ENCODE measurements at regions of chr5 and their contacts with region 1.

Region 1: DNA sequence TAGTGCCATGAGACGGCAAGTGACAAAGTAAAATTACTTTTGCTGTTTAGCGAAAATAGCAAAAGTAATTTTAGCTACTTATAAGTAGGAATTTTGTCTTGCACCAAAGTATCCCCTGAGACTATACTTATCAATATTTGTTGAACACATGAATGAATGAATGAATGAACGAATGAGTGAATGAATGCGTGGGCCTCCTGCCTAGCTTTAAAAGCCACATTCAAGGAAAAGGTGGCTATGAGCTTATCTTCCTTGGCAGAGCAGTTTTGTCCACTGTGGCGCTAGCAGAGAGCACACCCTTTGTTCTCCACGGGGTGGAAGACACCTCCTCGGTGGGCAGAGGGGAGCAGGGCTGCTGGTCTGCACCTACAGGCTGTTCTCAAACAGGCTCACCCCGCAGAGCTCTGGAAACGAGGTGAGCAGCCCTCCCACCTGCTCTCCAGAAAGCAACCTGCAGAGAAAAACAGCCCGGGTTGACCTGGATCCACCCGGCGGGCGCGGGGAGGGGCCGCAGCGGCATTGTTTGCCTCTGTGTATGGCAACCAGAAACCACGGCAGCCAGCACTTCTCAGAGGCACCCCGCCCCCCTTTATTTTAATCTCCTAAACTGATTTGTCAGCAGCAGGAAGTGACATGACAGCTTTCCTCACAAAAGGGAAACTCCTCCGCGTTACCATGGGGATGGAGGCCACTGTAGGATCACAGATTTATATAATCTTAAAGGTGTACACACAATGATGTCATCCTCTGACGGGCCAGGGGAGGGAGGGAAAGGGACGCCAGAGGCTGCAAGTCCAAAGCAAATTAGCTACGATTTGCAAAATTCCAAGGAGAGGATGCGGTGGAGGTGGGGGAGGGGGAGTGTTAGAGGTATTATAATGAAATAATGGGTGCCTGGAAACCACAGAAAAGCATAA is 5.9 kb downstream of the DUSP1 start:
- DNase-seq: peak; percentile 96
- H3K4me3 Mint-ChIP-seq: peak overlapping the region; percentile 78
- H3K27ac Mint-ChIP-seq: peak overlapping the region; percentile 90
- H3K4me1 Mint-ChIP-seq: peaks cover 46% of the 10 kb centered on the region
- H3K27me3 Mint-ChIP-seq: no peaks in the 10 kb centered on the region

Region 2: GRCh38 chr5:172777881-172778814 is 13.0 kb after region 1 on chr5:
- CTCF ChIA-PET with region 1: interaction called, 6 read pairs
- POLR2A ChIA-PET with region 1: interaction called, 9 read pairs
- intact Hi-C with region 1: loop called (anchors 1 kb)
- DNase-seq: peak; percentile 47
- H3K4me3 Mint-ChIP-seq: peak overlapping the region; percentile 38
- H3K27ac Mint-ChIP-seq: peak overlapping the region; percentile 87
- H3K4me1 Mint-ChIP-seq: peaks cover 61% of the 10 kb centered on the region
- H3K27me3 Mint-ChIP-seq: no peaks in the 10 kb centered on the region

Region 3: DNA sequence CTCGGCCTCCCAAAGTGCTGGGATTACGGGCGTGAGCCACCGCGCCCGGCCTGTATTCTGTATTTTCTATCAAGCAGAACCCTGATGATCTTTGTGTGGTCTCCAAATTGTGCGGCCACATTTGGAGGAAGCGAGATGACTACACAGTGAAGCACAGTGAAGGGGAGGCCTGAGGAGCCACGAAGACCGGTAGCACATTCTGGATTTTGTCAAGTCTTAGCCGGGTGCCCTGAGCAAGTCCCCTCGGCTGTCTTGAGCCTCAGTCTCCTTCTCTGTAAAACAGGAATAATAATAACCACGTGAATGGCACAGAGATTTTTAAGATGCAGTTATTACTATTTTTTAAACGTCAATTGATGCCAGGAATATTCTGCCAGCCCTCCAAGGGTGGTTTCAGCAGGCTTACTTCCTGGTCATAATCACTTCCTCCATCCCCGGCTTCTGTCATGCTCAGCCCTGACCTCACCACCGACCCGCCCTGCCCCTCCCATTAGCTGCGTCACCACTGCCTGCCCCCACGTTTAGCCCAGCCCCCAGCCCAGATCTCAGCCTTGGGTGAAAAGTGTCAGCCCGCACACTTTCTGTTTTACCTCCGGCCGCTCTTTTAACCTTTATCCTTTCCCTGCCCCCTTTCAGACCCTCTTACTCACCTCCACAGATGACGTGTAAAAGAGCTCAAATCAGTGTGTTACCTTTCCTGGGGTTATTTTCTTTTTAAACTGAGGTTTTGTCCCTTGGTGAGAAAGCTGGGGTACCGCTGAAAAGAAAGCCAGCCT is 42.0 kb after region 1 on chr5:
- CTCF ChIA-PET with region 1: interaction called, 6 read pairs
- POLR2A ChIA-PET with region 1: interaction called, 14 read pairs
- intact Hi-C with region 1: loop called (anchors 1 kb)
- DNase-seq: peak; percentile 98
- H3K4me3 Mint-ChIP-seq: peak overlapping the region; percentile 29
- H3K27ac Mint-ChIP-seq: peak overlapping the region; percentile 84
- H3K4me1 Mint-ChIP-seq: peaks cover 17% of the 10 kb centered on the region
- H3K27me3 Mint-ChIP-seq: no peaks in the 10 kb centered on the region

Region 4: GRCh38 chr5:172918421-172919371 is 153.6 kb after region 1 on chr5:
- CTCF ChIA-PET with region 1: no interaction called
- POLR2A ChIA-PET with region 1: no interaction called
- intact Hi-C with region 1: no loop called
- DNase-seq: no peak
- H3K4me3 Mint-ChIP-seq: no peak overlapping the region
- H3K27ac Mint-ChIP-seq: no peak overlapping the region
- H3K4me1 Mint-ChIP-seq: no peaks in the 10 kb centered on the region
- H3K27me3 Mint-ChIP-seq: no peaks in the 10 kb centered on the region

Region 5: GRCh38 chr5:172932313-172933017 is 167.4 kb after region 1 on chr5:
- CTCF ChIA-PET with region 1: interaction called, 13 read pairs
- POLR2A ChIA-PET with region 1: no interaction called
- intact Hi-C with region 1: loop called (anchors 1 kb)
- DNase-seq: peak; percentile 82
- H3K4me3 Mint-ChIP-seq: no peak overlapping the region
- H3K27ac Mint-ChIP-seq: no peak overlapping the region
- H3K4me1 Mint-ChIP-seq: peaks cover 6% of the 10 kb centered on the region
- H3K27me3 Mint-ChIP-seq: no peaks in the 10 kb centered on the region

Region 6: DNA sequence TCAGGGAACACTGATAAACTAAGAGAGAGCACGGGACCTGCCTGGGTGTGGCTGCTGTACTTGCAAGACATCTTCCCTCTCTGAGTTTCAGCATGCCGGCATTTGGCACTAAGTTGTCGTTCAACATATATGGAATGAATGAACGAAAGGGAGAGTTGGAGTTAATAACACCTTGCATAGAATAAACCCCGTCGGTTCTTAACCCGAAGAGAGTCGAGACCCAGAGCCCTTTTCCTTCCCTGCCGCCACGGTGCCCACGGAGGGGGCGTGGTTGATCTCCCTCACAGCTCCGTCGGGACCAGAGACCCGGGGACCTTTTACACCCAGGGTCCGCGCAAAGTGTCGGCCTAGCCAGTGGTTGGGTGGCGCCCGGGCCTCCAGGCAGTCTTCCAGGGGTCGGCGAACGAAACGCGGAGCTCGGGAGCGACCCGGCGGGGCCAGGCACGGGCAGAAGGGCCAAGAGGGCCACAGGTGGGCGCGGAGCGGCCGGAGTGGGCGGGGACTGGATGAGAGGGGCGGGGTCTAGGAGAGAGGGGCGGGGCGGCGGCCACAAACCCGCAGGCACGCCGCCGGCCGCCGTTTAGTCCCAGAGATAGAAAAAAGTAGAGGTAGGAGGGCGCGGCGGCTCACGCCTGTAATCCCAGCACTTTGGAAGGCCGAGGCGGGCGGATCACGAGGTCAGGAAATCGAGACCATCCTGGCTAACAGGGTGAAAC is 193.4 kb after region 1 on chr5:
- CTCF ChIA-PET with region 1: interaction called, 4 read pairs
- POLR2A ChIA-PET with region 1: no interaction called
- intact Hi-C with region 1: loop called (anchors 1 kb)
- DNase-seq: peak; percentile 71
- H3K4me3 Mint-ChIP-seq: peak overlapping the region; percentile 98
- H3K27ac Mint-ChIP-seq: peak overlapping the region; percentile 83
- H3K4me1 Mint-ChIP-seq: peaks cover 18% of the 10 kb centered on the region
- H3K27me3 Mint-ChIP-seq: no peaks in the 10 kb centered on the region

Measured in activated CD4-positive, alpha-beta memory T cell treated with anti-CD3 and anti-CD28 coated beads for 36 hours (primary cell).